Activated CD8-positive, alpha-beta memory T cell treated with anti-CD3 and anti-CD28 coated beads, Interleukin-2, amount 10 ng/mL, durations not matched to agents 7 days and 5 days (primary cell): ENCODE measurements at regions of chr12 and their contacts with region 1.

Region 1: DNA sequence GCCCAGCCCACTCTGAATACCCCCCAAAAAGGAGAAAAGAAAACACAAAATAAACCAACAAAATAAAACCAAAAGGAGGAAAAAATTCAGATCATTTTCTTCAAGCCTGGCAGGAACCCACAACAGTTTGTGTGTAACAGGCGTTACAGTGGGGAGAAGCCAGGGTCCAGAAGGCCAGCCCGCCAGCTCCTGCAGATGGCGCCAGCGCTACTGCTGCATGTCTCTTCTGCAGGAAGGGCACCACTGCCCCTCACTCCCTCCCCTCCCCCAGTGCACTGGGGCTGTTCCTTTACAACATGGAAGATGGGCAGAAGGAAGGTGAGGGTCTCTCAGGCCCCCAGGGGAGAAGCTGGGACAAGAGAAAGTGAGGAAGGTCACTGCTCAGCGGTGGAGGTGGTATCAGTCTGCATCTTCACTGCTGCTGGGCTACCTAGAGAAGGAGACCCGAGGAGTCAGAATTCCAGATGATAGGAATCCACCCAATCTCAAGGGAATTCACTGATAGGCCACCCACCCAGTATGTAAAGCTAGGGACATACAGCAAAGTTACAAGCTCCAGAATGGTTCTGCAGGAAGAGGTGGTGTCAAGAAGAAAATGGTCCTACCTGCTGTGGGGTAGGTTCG is 2.3 kb upstream of the NOP2 start:
- DNase-seq: peak; percentile 74
- ATAC-seq: no peak
- H3K4me3 Mint-ChIP-seq: no peak overlapping the region
- H3K27ac Mint-ChIP-seq: peak overlapping the region; percentile 54
- H3K4me1 Mint-ChIP-seq: peaks cover 51% of the 10 kb centered on the region
- H3K27me3 Mint-ChIP-seq: no peaks in the 10 kb centered on the region

Region 2: GRCh38 chr12:6493497-6494257 is 76.7 kb before region 1 on chr12 and contains the start of gene NCAPD2:
- CTCF ChIA-PET with region 1: interaction called, 10 read pairs
- DNase-seq: peak; percentile 99
- ATAC-seq: peak; percentile 87
- H3K4me3 Mint-ChIP-seq: peak within 1 kb of the TSS; percentile 91
- H3K27ac Mint-ChIP-seq: peak within 1 kb of the TSS; percentile 95
- H3K4me1 Mint-ChIP-seq: peaks cover 43% of the 10 kb centered on the region
- H3K27me3 Mint-ChIP-seq: no peaks in the 10 kb centered on the region
- total RNA-seq, gene NCAPD2: 173 to 200 TPM

Region 3: GRCh38 chr12:6554168-6555017 is 16.0 kb before region 1 on chr12:
- CTCF ChIA-PET with region 1: interaction called, 25 read pairs
- DNase-seq: peak; percentile 88
- ATAC-seq: peak; percentile 56
- H3K4me3 Mint-ChIP-seq: peak overlapping the region; percentile 84
- H3K27ac Mint-ChIP-seq: peak overlapping the region; percentile 64
- H3K4me1 Mint-ChIP-seq: peaks cover 54% of the 10 kb centered on the region
- H3K27me3 Mint-ChIP-seq: no peaks in the 10 kb centered on the region

Region 4: DNA sequence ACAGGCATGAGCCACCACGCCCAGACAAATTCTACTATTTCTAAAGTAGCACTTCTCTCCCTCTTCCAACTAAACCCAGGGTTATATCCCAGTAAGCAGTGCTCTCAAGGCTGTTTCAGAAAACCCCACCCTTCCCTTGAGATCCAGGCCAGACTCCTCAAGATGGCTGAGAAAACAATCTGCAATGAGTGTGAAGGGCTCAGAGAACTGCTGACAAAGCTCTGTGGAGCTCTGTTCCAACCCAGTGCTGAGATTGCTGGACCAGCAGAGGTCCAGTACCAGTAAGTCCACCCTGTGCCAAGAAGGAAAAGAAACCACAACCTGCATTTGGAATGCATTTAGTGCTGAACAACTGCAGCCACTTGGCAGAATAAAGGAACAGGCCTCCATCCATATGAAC is 10.9 kb before region 1 on chr12:
- CTCF ChIA-PET with region 1: interaction called, 25 read pairs
- DNase-seq: no peak
- ATAC-seq: no peak
- H3K4me3 Mint-ChIP-seq: no peak overlapping the region
- H3K27ac Mint-ChIP-seq: no peak overlapping the region
- H3K4me1 Mint-ChIP-seq: peaks cover 37% of the 10 kb centered on the region
- H3K27me3 Mint-ChIP-seq: no peaks in the 10 kb centered on the region

Region 5: DNA sequence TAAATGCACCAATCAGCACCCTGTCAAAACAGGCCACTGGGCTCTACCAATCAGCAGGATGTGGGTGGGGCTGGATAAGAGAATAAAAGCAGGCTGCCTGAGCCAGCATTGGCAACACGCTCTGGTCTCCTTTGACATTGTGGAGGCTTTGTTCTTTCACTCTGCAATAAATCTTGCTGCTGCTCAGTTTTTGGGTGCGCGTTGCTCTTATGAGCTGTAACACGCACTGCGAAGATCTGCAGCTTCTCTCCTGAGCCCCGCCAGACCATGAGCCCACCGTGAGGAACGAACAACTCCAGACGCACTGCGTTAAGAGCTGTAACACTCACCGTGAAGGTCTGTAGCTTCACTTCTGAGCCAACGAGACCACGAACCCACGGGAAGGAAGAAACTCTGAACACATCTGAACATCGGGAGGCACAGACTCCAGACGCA is 138.6 kb after region 1 on chr12:
- CTCF ChIA-PET with region 1: no interaction called
- DNase-seq: peak; percentile 53
- ATAC-seq: peak; percentile 49
- H3K4me3 Mint-ChIP-seq: peak overlapping the region; percentile 33
- H3K27ac Mint-ChIP-seq: peak overlapping the region; percentile 32
- H3K4me1 Mint-ChIP-seq: peaks cover 9% of the 10 kb centered on the region
- H3K27me3 Mint-ChIP-seq: peaks cover 13% of the 10 kb centered on the region

Region 6: GRCh38 chr12:6778574-6779550 is 208.5 kb after region 1 on chr12:
- CTCF ChIA-PET with region 1: no interaction called
- DNase-seq: peak; percentile 94
- ATAC-seq: peak; percentile 70
- H3K4me3 Mint-ChIP-seq: peak overlapping the region; percentile 52
- H3K27ac Mint-ChIP-seq: peak overlapping the region; percentile 80
- H3K4me1 Mint-ChIP-seq: peaks cover 60% of the 10 kb centered on the region
- H3K27me3 Mint-ChIP-seq: no peaks in the 10 kb centered on the region